Caco-2 (cell line): ENCODE measurements at regions of chr6 and their contacts with region 1.

Region 1: GRCh38 chr6:139230391-139230840 is 61.4 kb downstream of the TXLNB start:
- DNase-seq: peak; percentile 41 to 53
- H3K4me3 ChIP-seq: no peak overlapping the region
- H3K4me3 Mint-ChIP-seq: no peak overlapping the region
- H3K27ac Mint-ChIP-seq: no peak overlapping the region
- H3K4me1 ChIP-seq: no peaks in the 10 kb centered on the region
- H3K4me1 Mint-ChIP-seq: peaks cover 12% of the 10 kb centered on the region
- H3K27me3 ChIP-seq: no peaks in the 10 kb centered on the region
- H3K27me3 Mint-ChIP-seq: no peaks in the 10 kb centered on the region
- CTCF ChIP-seq: peak in 1 of 2 experiments; percentile 25

Region 2: DNA sequence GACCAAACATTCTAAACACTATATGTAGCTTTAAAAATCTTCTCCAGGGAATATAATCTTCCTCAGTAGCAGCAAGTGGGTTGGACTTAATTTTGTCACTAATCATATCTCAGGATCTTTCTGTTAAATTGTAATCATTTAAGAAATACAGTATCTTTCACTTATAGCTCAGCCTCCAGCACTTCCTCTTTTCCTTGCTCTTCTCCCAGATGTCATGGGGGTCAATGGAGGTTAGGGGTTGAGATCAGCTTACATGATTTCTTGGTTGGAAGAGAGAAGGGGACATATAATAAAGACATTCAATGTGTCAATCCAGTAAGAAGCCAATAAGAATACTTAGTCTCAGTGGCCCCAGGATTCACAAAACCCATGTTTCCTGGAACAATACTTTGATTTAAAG is 226.7 kb before region 1 on chr6:
- CTCF ChIA-PET with region 1: no interaction called
- POLR2A ChIA-PET with region 1: no interaction called
- intact Hi-C with region 1: no loop called
- DNase-seq: no peak
- H3K4me3 ChIP-seq: no peak overlapping the region
- H3K4me3 Mint-ChIP-seq: no peak overlapping the region
- H3K27ac Mint-ChIP-seq: no peak overlapping the region
- H3K4me1 ChIP-seq: no peaks in the 10 kb centered on the region
- H3K4me1 Mint-ChIP-seq: peaks cover 6% of the 10 kb centered on the region
- H3K27me3 ChIP-seq: no peaks in the 10 kb centered on the region
- H3K27me3 Mint-ChIP-seq: no peaks in the 10 kb centered on the region
- CTCF ChIP-seq: no peak

Region 3: DNA sequence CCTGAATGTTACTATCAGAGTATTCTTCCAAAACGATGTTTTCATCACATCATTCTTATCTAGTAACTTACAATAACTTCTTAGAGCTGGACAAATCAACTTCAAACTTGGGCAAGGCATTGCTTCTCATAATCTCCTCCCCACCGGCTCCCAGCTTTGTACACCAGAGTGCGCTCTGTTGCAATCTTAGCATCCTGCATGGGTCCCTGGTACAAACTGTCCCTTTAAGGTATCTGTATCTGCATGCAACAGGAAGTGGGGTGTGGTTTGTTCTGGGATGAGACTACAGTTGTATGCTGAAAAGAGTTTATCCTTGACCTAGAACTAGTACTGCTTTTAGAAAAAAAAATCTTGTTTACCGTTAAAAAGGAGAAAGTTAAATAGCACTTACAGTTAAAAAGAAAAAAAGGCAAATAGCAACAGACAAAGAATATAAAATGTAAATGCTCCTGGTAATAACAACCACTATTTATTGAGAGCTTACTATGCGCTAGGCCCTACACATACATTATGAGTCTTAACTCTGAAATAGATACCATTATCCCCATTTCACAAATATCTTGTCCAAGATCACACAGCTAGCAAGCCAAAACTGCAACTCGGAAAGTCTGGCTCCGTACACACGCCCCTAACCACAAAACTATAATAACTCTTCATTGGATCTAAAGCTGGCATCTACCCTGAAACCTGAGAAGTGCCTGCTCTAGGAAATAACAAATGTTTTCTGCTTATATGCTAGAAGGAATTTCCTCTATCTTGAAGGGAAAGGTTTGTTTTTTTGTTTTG is 105.3 kb before region 1 on chr6:
- CTCF ChIA-PET with region 1: interaction called, 3 read pairs
- POLR2A ChIA-PET with region 1: no interaction called
- intact Hi-C with region 1: loop called (anchors 1 kb)
- DNase-seq: peak; percentile 59 to 67
- H3K4me3 ChIP-seq: no peak overlapping the region
- H3K4me3 Mint-ChIP-seq: no peak overlapping the region
- H3K27ac Mint-ChIP-seq: no peak overlapping the region
- H3K4me1 ChIP-seq: 0 out of 2 replicates have a peak, but pooled peaks cover 4% of the 10 kb centered on the region
- H3K4me1 Mint-ChIP-seq: no peaks in the 10 kb centered on the region
- H3K27me3 ChIP-seq: no peaks in the 10 kb centered on the region
- H3K27me3 Mint-ChIP-seq: peaks cover 8% of the 10 kb centered on the region
- CTCF ChIP-seq: peak; percentile 35 to 68

Region 4: DNA sequence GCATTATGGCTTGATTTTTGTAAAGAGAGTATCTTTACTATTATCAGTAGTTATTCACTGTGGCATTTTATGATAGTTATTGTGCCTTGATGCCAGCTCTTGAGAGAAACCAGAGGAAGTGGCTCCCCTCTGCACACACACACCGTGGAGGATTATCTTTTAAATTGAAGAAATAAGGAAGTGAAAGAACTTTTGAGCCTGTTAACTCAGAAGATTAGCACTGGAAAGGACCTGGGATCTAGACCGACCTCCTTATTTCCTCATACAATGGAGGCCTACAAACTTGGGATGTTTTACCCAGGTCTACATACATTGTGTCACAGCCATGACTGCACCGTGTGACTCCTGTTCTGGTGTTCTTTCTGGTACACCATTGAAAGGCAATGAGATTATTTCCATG is 55.0 kb before region 1 on chr6:
- CTCF ChIA-PET with region 1: no interaction called
- POLR2A ChIA-PET with region 1: no interaction called
- intact Hi-C with region 1: no loop called
- DNase-seq: no peak
- H3K4me3 ChIP-seq: no peak overlapping the region
- H3K4me3 Mint-ChIP-seq: no peak overlapping the region
- H3K27ac Mint-ChIP-seq: no peak overlapping the region
- H3K4me1 ChIP-seq: peaks cover 10% of the 10 kb centered on the region
- H3K4me1 Mint-ChIP-seq: peaks cover 9% of the 10 kb centered on the region
- H3K27me3 ChIP-seq: no peaks in the 10 kb centered on the region
- H3K27me3 Mint-ChIP-seq: no peaks in the 10 kb centered on the region
- CTCF ChIP-seq: no peak

Region 5: DNA sequence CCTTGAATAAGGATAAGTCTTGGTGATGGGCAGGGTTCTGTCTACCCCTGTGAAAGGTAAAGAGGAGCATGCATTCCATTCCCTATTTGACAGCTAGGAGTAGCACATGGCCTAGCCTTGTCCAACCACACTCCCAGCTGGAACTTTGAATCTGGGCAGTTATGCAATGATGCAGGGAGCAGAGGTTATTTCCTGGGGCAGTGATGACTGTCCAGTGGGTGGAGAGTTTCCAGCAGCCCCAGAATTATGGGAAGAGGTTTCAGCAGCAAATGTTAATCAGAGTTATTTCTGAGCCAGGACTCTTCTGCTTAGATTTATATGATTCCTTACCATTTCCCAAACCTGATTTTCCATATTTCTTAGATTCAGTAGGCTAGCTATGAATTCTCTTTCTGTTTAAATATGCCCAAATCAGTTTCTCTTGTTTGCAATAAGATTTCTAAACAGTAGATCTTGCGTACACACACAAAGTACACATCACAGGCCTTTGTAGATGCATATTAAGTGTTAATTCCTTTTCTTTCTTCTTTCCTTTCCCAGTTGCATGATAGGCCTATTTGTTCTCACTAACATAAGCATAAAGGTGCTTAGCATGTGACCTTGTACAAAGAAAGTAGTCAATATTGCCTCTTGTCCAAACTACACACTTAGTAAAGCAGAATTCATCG is 78.7 kb after region 1 on chr6:
- CTCF ChIA-PET with region 1: interaction called, 3 read pairs
- POLR2A ChIA-PET with region 1: no interaction called
- intact Hi-C with region 1: loop called (anchors 1 kb)
- DNase-seq: peak; percentile 68 to 71
- H3K4me3 ChIP-seq: no peak overlapping the region
- H3K4me3 Mint-ChIP-seq: no peak overlapping the region
- H3K27ac Mint-ChIP-seq: no peak overlapping the region
- H3K4me1 ChIP-seq: peaks cover 15% of the 10 kb centered on the region
- H3K4me1 Mint-ChIP-seq: peaks cover 18% of the 10 kb centered on the region
- H3K27me3 ChIP-seq: no peaks in the 10 kb centered on the region
- H3K27me3 Mint-ChIP-seq: no peaks in the 10 kb centered on the region
- CTCF ChIP-seq: no peak

Region 6: DNA sequence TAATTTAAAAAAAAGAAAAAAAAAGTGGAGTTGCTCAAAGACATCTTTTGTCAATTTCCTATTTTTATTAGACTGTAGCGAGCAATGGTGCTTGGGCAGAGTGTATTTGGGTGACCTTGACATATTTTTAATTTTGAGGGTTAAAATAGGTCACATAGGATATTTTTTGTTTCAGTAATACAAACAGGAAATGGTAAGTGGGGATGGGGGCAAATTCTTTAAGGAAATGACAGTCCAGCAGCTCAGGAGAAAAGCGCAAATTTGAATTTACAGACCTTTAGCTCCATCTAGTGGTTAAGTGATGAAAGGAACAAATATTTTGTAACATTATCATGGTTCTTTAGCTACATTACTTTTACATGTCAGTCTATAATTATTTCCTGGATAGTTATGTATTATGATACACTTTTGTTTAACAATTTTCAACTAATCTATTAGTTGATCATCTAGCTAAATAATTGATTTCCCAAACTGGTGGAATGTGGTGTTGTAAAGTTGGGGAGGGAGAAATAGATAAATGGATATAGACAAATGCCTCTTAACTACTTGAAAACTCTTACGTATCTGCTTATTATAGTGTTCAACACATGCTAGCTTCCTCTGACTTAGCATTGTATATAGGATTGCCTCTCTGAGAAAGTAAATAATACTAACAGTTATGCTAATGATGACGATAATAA is 134.0 kb after region 1 on chr6:
- CTCF ChIA-PET with region 1: interaction called, 28 read pairs
- POLR2A ChIA-PET with region 1: no interaction called
- intact Hi-C with region 1: loop called (anchors 1 kb)
- DNase-seq: peak in 1 of 2 experiments; percentile 47
- H3K4me3 ChIP-seq: no peak overlapping the region
- H3K4me3 Mint-ChIP-seq: no peak overlapping the region
- H3K27ac Mint-ChIP-seq: no peak overlapping the region
- H3K4me1 ChIP-seq: peaks cover 24% of the 10 kb centered on the region
- H3K4me1 Mint-ChIP-seq: peaks cover 12% of the 10 kb centered on the region
- H3K27me3 ChIP-seq: no peaks in the 10 kb centered on the region
- H3K27me3 Mint-ChIP-seq: no peaks in the 10 kb centered on the region
- CTCF ChIP-seq: peak; percentile 34 to 81